ENCODE measurements at regions of chr3 and their contacts with region 1.

Region 1: GRCh38 chr3:63303238-63303637 is 25.1 kb downstream of the SYNPR start:
- DNase-seq: no peak
- H3K4me3 ChIP-seq: no peak overlapping the region
- H3K27ac ChIP-seq: no peak overlapping the region
- H3K4me1 ChIP-seq: no peaks in the 10 kb centered on the region
- H3K27me3 ChIP-seq: no peaks in the 10 kb centered on the region
- CTCF ChIP-seq: no peak

Region 2: DNA sequence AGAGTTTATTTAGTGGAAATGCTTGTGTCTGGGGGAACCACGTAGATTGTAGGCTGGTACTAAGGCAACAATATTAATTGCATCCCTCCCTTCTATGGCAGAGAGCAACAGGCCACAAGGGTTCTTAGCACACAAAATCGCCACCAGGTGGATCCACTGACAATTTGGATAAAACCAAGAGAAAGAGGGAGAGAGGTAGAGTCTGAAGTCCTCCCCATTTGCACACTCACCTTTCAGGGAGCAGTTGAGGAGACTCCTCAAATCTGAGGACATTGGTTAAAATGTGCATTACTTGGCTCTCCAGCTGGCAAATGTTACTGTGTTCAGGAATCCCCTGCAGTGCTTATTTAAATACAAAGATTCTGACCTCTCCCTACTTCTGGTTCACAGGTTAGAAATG is 748.9 kb before region 1 on chr3:
- CTCF ChIA-PET with region 1: no interaction called
- POLR2A ChIA-PET with region 1: no interaction called
- intact Hi-C with region 1: no loop called
- DNase-seq: no peak
- H3K4me3 ChIP-seq: no peak overlapping the region
- H3K27ac ChIP-seq: no peak overlapping the region
- H3K4me1 ChIP-seq: no peaks in the 10 kb centered on the region
- H3K27me3 ChIP-seq: peaks cover 20% of the 10 kb centered on the region; the same call in 1 of the 2 replicates
- CTCF ChIP-seq: no peak; the same call in 1 of the 2 replicates

Region 3: DNA sequence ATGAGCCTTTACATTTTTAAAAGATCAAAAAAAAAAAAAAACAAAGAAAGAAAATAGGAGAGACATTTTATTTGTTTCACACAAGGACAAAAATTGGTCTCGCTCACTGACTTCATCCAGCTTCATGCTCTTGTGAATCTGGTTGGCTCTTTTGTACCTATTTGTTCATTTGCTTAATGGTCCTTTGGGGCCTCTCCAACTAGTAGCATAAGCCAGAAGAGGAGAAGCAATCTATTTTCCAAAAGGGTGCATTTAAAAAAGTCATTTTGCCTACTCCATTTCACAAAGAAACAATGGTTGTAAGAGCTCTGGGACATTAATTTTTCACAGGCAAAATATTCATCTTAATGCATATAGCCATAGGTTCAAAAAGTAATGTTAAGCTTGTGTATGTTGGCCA is 1552.9 kb after region 1 on chr3:
- CTCF ChIA-PET with region 1: no interaction called
- POLR2A ChIA-PET with region 1: interaction called, 11 read pairs
- intact Hi-C with region 1: no loop called
- DNase-seq: no peak
- H3K4me3 ChIP-seq: no peak overlapping the region
- H3K27ac ChIP-seq: no peak overlapping the region
- H3K4me1 ChIP-seq: no peaks in the 10 kb centered on the region
- H3K27me3 ChIP-seq: no peaks in the 10 kb centered on the region
- CTCF ChIP-seq: no peak

Measured in PC-9 (cell line).